ENCODE measurements at regions of chr4 and their contacts with region 1.

Region 1: GRCh38 chr4:25439918-25440477 is 62.9 kb downstream of the ANAPC4 start:
- DNase-seq: peak; percentile 45
- ATAC-seq: peak; percentile 84
- H3K4me3 ChIP-seq: no peak overlapping the region
- H3K27ac ChIP-seq: no peak overlapping the region
- H3K4me1 ChIP-seq: no peaks in the 10 kb centered on the region
- H3K27me3 ChIP-seq: no peaks in the 10 kb centered on the region
- CTCF ChIP-seq: peak; percentile 57 to 94 (median 93); a peak in 5 of 6 replicates
- POLR2A ChIP-seq: no peak
- RAD21 ChIP-seq: peak; percentile 75

Region 2: DNA sequence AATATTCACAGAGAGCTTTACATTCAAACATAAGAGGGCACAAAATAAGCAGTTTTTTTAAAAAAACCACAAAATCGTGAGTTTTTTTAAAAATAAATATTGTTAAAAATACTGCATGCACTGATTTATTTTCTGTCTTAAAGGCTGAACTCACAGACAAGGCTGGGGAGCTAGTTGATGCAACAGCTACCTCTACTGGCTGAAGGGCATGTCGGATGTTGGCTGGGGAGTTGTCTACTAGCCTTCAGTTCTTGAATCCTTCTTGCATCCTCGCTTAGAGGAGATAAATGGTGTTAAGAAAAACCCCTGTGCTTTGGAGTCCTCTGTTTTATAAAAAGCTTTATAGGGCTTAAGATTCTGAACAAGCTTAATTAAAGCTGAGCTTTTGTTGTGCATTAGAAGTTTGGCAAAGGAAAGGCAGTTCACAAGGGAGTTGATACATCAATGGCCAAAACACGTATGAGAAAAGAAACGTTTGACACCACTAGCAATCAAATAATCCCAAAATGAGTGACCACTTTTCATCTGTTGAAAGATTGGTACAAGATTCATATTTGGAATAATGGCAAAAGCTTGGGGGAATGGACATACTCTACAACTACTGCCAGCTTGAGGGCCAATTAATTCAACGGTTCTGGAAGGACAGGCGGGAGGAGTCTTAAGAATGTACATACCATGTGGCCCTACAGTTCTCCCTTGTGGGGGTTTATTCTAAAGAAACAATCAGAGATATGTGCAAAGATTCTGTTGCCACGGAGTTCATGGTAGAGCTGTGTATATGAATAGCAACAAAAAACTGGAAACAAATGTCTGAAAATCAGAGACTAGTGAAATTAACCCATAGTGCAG is 328.1 kb after region 1 on chr4:
- CTCF ChIA-PET with region 1: interaction called, 65 read pairs
- POLR2A ChIA-PET with region 1: no interaction called
- RAD21 ChIA-PET with region 1: interaction called in 1 of 2 experiments, 7 read pairs
- intact Hi-C with region 1: loop called (anchors 1 kb)
- DNase-seq: peak; percentile 37
- ATAC-seq: peak; percentile 87
- H3K4me3 ChIP-seq: no peak overlapping the region
- H3K27ac ChIP-seq: no peak overlapping the region
- H3K4me1 ChIP-seq: no peaks in the 10 kb centered on the region
- H3K27me3 ChIP-seq: no peaks in the 10 kb centered on the region
- CTCF ChIP-seq: peak; percentile 76 to 88 (median 80); a peak in 5 of 6 replicates
- POLR2A ChIP-seq: no peak
- RAD21 ChIP-seq: peak; percentile 77

Region 3: DNA sequence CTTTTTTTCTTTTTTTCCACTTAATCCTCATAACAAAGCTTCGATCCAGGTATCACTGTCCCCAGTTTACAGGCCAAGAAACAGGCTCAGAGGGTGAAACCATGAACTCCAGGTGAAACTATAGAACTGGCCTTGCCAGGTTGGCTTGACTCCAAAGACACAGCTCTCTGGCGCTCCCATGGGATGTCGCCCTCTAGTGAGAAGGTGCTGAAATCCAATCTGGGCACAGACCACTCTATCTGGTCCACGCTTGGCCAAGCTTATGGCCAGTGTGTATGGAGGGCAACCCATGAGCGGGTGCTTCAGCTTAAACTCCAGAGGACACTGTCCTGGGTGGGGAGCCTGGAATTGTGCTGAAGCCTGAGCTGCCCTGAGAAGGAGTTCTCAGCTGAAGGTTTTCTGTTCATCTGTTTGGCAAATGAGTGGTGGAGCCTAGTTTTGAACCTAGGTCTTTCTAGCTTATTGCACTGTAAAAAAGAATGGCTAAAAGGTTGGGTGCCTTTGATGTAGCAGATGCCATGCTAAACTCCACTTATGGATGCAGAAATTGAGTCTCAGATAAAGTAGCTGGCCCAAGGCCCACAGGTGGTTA is 352.3 kb after region 1 on chr4:
- CTCF ChIA-PET with region 1: interaction called, 27 read pairs
- POLR2A ChIA-PET with region 1: no interaction called
- RAD21 ChIA-PET with region 1: interaction called, 5 to 6 read pairs
- intact Hi-C with region 1: loop called (anchors 1 kb)
- DNase-seq: peak; percentile 51
- ATAC-seq: peak; percentile 92
- H3K4me3 ChIP-seq: no peak overlapping the region
- H3K27ac ChIP-seq: no peak overlapping the region
- H3K4me1 ChIP-seq: peaks cover 4 to 15% of the 10 kb centered on the region in 2 experiments
- H3K27me3 ChIP-seq: no peaks in the 10 kb centered on the region
- CTCF ChIP-seq: peak; percentile 67 to 88 (median 86); a peak in 5 of 6 replicates
- POLR2A ChIP-seq: no peak
- RAD21 ChIP-seq: peak; percentile 70

Region 4: GRCh38 chr4:25862411-25863346 is 422.7 kb after region 1 on chr4 and contains the start of gene SEL1L3:
- CTCF ChIA-PET with region 1: interaction called, 4 read pairs
- POLR2A ChIA-PET with region 1: no interaction called
- RAD21 ChIA-PET with region 1: no interaction called
- intact Hi-C with region 1: loop called (anchors 5 kb)
- DNase-seq: no peak
- ATAC-seq: peak; percentile 64
- H3K4me3 ChIP-seq: peak within 1 kb of the TSS; percentile 73 to 92
- H3K27ac ChIP-seq: peak within 1 kb of the TSS; percentile 61; the same call in 1 of the 2 replicates
- H3K4me1 ChIP-seq: peaks cover 17 to 43% of the 10 kb centered on the region in 2 experiments
- H3K27me3 ChIP-seq: no peaks in the 10 kb centered on the region
- CTCF ChIP-seq: no peak
- POLR2A ChIP-seq: no peak
- RAD21 ChIP-seq: no peak
- total RNA-seq, gene SEL1L3: 45.0 TPM